AG04450 (cell line): ENCODE measurements at regions of chr3 and their contacts with region 1.

Region 1: DNA sequence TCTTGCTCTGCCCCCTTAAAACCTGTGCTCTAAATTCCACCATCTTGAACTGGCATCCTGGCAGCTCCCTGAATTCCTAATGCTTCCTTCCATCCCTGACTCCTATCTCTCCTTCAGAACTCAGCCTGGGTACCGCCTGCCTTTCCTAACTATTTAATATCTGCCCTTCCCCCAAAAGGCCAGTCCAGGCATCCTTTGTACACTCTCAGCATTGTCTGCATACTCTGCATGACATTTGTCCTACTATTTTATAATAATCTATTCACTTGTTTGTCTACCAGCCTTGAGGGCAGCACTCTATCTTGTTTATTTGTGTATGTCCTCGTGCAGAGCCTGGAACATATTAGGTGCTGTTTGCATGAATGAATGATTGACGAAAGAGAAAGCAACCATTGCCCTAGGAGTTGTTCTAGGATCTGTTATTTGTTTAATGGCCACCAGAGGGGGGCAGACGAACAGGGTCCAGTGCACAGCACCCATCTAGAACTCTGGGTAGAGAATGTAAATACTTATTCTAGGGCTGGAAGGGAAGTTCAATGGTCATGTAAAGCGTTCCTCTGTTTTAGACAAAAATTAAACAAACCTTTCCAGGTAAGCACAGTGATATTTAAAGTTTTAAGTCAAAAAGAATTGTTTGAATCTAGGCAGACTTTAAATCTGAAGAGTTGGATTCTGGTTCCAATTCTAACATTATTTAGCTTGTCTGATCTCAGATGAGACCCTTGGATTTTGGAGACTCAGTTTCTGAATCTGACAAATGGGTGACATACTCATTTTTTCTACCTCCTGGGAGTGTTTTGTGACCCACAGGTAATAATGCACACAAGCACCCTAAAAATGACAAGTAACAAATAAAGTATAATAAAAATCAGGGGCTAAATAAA is 125.8 kb upstream of the GALNT15 start:
- DNase-seq: peak; percentile 50
- H3K4me3 ChIP-seq: no peak overlapping the region
- H3K27ac ChIP-seq: no peak overlapping the region
- H3K27me3 ChIP-seq: no peaks in the 10 kb centered on the region
- CTCF ChIP-seq: peak; percentile 78

Region 2: DNA sequence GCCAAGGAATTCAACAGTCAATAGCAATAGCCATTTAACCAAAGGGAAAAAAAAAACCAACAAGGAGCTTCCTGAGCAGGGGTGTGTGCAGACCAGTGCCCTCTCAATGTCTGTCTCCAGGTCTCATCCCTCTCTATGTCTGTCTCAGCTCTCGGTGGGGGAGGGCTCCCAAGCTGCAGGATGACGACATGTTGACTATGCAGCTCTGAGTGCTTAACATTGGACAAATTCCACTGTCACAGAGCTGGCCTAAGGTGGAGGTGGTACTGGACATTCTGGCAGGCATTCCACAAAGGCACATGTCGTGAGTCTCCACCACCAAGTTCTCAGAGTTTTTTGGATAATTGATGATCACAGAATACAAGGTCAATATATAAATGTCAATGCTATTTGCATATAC is 844.7 kb before region 1 on chr3:
- CTCF ChIA-PET with region 1: no interaction called
- POLR2A ChIA-PET with region 1: no interaction called
- DNase-seq: no peak
- H3K4me3 ChIP-seq: no peak overlapping the region
- H3K27ac ChIP-seq: no peak overlapping the region
- H3K27me3 ChIP-seq: peaks cover 3% of the 10 kb centered on the region
- CTCF ChIP-seq: no peak

Region 3: DNA sequence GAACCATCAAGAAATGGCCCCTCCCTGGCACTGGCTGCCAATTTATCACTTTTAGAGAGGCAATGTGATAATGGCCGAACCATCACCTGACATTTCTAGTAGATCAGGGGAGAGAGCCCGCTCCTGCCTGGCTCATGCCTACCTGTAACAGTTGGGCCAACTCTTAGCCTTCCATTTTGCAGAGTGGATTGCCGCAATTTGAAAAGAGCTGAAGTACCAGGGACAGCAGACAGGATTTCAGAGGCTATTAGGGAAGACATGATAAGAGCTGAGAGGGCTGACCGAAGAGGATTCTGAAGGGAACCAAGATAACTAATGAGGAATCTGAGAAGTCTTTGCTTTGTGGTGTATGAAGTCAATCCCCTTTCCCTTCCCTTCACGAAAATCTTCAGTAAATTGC is 129.7 kb before region 1 on chr3:
- CTCF ChIA-PET with region 1: no interaction called
- POLR2A ChIA-PET with region 1: no interaction called
- DNase-seq: no peak
- H3K4me3 ChIP-seq: no peak overlapping the region
- H3K27ac ChIP-seq: no peak overlapping the region
- H3K27me3 ChIP-seq: no peaks in the 10 kb centered on the region
- CTCF ChIP-seq: no peak

Region 4: GRCh38 chr3:16124636-16125035 is 76.0 kb after region 1 on chr3:
- CTCF ChIA-PET with region 1: interaction called, 10 read pairs
- POLR2A ChIA-PET with region 1: no interaction called
- DNase-seq: peak; percentile 97
- H3K4me3 ChIP-seq: no peak overlapping the region
- H3K27ac ChIP-seq: peak overlapping the region; percentile 96
- H3K27me3 ChIP-seq: no peaks in the 10 kb centered on the region
- CTCF ChIP-seq: no peak

Region 5: DNA sequence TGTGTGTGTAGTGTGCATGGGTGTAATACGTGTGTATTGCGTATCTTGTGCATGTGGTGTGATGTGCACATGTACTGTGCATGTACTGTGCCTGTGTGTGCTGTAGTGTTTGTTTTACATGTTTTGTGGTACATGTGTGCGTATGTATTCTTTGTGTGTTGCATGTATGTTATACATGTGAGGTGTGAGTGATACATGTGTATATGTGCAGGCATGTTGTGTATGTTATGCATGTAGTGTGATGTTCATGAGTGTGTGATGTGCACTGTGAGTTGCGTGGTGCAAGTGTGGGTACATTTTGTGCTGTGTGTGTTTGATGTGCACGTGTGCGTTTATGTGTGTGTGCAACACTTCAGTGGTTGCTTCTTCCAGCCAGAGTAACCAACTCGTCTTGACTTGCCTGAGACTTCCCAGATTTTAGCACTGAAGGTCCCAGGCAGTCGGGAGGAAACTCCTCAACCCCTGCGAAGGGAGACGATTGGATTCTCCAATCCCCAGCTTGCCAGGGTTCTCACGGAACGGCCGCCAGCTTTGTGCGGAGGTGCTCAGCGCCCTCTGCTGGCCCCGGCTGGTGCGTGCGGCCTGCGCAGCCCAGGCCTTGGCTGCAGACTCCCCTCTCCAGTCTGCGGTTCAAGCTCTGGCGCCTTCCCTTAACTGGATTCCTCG is 129.4 kb after region 1 on chr3:
- CTCF ChIA-PET with region 1: interaction called, 119 read pairs
- POLR2A ChIA-PET with region 1: no interaction called
- DNase-seq: peak; percentile 76
- H3K4me3 ChIP-seq: peak overlapping the region; percentile 57
- H3K27ac ChIP-seq: no peak overlapping the region
- H3K27me3 ChIP-seq: no peaks in the 10 kb centered on the region
- CTCF ChIP-seq: peak; percentile 98

Region 6: DNA sequence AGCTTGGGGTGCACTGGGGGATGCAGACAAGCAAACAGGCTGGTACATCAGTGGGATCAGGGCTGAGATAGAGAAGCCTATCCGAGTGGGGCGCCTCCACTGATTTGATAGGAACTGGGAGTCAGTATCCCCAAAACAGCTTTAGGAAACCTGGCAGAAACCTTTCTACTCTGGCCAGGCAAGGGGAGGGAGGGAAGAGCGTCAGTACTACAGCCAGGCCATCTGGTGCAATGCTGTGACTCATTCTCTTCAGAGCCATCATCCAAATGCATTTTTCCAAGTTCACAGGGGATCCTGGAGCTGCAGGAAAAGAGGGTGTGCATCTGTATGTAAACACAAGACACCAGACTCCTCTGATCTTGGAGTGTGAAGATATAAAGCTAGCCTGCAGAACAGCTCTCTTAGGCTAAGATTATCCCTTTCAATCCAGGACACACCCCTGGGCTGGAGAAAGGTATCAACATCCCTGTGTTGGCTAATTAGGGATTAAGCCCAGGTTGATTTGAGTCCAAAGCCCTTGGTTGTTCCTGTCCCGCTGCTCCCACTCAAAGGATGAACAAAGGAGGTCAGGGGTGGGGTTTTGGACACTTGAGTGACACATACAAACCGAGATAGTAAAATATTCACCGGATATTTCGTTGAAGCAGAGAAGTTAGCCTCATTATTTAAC is 135.1 kb after region 1 on chr3:
- CTCF ChIA-PET with region 1: interaction called, 119 read pairs
- POLR2A ChIA-PET with region 1: no interaction called
- DNase-seq: peak; percentile 87
- H3K4me3 ChIP-seq: no peak overlapping the region
- H3K27ac ChIP-seq: peak overlapping the region; percentile 52
- H3K27me3 ChIP-seq: no peaks in the 10 kb centered on the region
- CTCF ChIP-seq: no peak

Region 7: GRCh38 chr3:16247276-16248061 is 198.8 kb after region 1 on chr3:
- CTCF ChIA-PET with region 1: interaction called, 21 read pairs
- POLR2A ChIA-PET with region 1: interaction called, 4 read pairs
- DNase-seq: peak; percentile 71
- H3K4me3 ChIP-seq: no peak overlapping the region
- H3K27ac ChIP-seq: no peak overlapping the region
- H3K27me3 ChIP-seq: no peaks in the 10 kb centered on the region
- CTCF ChIP-seq: peak; percentile 93